Activated T-helper 1 cell treated with anti-CD3 and anti-CD28 coated beads, Interleukin-12 subunit alpha, Interleukin-12 subunit beta, Interleukin-2, Interleukin-4 antibody, amounts not matched to agents 30 ng/mL and 10 ng/mL and 1 ng/mL, durations not matched to agents 14 hours and 24 hours and 36 hours (primary cell): ENCODE measurements at regions of chr16 and their contacts with region 1.

Region 1: DNA sequence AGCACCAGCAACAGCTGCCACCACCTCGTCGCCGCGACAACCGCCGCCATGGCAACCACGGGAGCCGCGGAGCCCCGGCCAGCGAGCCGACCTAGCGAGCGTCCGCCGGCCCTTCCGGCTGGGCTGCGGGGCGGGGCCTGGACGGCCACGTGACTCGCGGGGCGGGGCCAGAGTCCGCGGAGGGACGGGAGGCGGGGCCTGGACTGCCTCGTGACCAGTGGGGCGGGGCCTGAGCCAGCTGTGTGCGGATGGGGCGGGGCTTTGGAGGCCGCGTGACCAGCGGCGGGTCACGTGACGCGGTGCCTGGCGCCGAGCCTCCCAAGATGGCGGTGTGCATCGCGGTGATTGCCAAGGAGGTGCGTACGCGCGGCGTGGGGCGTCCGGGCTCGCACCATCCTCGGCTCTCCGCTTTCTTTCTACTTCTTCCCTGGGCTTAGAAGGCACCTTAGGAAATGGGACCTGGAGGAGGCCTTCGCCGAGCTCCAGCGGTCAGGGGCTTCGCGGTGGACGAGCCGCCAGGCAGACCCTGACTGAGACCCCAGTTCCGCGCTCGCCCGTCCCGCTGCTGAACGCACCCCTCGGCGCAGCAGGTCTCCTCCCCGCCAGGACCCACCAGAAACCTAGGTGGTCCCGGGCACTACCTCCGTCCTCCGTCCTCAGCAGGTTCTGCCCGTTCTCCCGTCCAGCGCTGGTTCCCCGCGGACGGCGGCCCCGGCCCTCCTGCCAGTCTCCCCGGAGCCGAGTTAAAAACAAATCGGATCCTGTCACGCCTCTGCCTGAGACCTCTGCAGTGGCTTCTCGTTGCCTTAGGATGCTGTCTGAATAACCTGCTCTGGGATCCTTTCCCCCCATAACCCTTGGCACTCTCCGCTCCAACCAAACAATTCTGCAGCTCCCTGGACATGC is at the starts of genes GALNS and TRAPPC2L:
- DNase-seq: peak; percentile 98
- H3K4me3 Mint-ChIP-seq: peak within 1 kb of the TSS; percentile 96
- H3K27ac Mint-ChIP-seq: peak within 1 kb of the TSS; percentile 88
- H3K4me1 Mint-ChIP-seq: peaks cover 25% of the 10 kb centered on the region
- H3K27me3 Mint-ChIP-seq: no peaks in the 10 kb centered on the region
- total RNA-seq, gene GALNS: 21.9 and 23.8 TPM in 2 replicates
- total RNA-seq, gene TRAPPC2L: 63.1 and 65.4 TPM in 2 replicates

Region 2: DNA sequence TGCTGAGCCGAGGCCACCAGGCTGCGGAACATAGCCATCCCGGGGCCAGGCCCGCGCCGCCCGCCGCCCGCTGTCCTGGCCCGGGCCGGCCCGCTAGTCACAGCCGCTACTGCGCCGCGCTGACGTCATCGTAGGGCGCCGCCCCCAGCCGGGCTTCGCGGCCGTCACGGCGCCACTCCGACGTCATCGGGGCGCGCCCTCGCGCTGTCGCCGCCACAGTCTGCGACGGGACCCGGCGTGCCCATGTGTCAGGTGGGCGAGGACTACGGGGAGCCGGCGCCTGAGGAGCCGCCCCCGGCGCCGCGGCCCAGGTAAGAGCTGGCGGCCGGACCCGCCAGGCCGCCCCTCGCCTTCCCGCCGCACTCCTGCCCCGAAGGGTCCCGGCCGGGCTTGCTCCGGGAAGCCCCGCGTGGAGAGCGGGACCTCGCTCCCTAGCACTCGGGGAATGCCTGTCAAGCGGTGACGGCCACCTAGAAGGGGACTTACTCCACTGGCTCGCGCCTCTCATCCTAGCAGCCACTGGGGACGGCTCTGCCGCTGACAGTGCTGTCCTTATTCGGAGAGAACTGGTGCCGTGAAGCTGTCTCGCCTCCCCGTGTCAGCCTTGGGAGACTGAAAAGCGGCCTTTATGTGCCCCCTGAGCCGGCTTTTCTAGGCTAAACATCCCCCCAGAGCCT is 150.7 kb before region 1 on chr16 and contains the starts of genes CTU2 and RNF166:
- intact Hi-C with region 1: loop called (anchors 1 kb)
- DNase-seq: peak; percentile 92
- H3K4me3 Mint-ChIP-seq: peak within 1 kb of the TSS; percentile 89
- H3K27ac Mint-ChIP-seq: peak within 1 kb of the TSS; percentile 86
- H3K4me1 Mint-ChIP-seq: peaks cover 47% of the 10 kb centered on the region
- H3K27me3 Mint-ChIP-seq: no peaks in the 10 kb centered on the region
- total RNA-seq, gene CTU2: 66.3 and 74.7 TPM in 2 replicates
- total RNA-seq, gene RNF166: 42.4 and 45.0 TPM in 2 replicates

Region 3: DNA sequence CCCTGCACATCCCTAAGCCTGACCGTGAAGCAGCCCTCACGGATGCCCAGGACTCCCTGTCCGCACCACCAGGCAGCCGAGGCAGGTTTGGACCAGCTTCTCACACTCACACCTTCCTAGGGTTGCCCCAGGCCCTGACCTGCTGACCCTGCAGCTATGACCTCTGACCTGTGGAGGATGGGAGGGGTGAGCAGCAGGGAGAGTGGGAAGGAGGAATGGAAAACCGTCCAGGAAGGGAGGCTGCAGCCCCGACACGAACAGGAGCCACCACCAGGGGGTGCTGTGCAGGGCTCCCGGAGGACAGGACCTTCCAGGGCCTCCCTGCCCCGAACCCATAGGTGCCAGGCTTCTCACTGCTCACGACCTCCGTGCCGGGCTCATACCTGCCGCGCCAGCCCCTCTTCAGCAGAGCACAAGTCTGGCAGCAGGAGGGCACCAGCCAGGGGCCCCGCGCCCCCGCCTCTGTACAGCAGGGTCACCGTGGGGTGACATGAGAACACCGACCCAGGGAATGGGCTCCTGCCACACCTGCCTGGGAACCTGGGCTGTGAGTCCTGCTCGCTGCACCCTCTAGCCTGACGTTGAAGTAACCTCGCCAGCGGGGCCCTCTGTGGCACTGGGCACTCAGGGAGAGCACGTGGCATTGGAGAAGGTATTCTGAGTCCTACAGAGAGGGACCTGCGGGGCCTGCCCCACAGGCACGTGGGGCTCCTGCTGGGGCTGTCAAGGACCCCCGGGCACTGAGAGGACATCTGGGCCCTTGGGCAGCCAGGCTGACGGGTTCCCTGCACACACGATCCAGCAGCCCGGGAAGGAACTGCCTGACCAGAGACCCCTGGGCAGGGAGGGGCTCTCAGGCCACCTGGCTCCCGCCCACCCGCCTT is 113.1 kb before region 1 on chr16:
- intact Hi-C with region 1: loop called (anchors 2 kb)
- DNase-seq: peak; percentile 47
- H3K4me3 Mint-ChIP-seq: no peak overlapping the region
- H3K27ac Mint-ChIP-seq: no peak overlapping the region
- H3K4me1 Mint-ChIP-seq: peaks cover 10% of the 10 kb centered on the region
- H3K27me3 Mint-ChIP-seq: no peaks in the 10 kb centered on the region

Region 4: GRCh38 chr16:88803264-88803987 is 53.7 kb before region 1 on chr16 and contains the start of gene CDT1:
- intact Hi-C with region 1: loop called (anchors 2 kb)
- DNase-seq: peak; percentile 84
- H3K4me3 Mint-ChIP-seq: peak within 1 kb of the TSS; percentile 85
- H3K27ac Mint-ChIP-seq: peak within 1 kb of the TSS; percentile 84
- H3K4me1 Mint-ChIP-seq: peaks cover 15% of the 10 kb centered on the region
- H3K27me3 Mint-ChIP-seq: no peaks in the 10 kb centered on the region
- total RNA-seq, gene CDT1: 95.4 and 97.3 TPM in 2 replicates

Region 5: DNA sequence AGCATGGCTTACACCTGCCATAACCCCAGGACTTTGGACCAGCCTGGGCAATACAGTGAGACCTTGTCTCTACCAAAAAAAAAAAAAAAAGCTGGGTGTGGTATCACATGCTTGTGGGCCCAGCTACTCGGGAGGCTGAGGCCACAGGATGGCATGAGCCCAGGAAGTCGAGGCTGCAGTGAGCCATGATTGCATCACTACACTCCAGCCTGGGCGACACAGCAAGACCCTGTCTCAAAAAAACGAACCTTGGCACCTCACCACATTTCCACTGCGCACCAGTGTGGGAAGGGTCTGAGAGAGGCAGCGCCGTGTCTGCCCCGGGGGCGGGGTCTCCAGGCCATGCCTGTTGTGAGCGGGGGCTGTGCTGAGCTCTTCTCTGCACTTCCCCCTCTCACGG is 242.8 kb after region 1 on chr16:
- intact Hi-C with region 1: loop called (anchors 5 kb)
- DNase-seq: no peak
- H3K4me3 Mint-ChIP-seq: peak overlapping the region; percentile 56
- H3K27ac Mint-ChIP-seq: peak overlapping the region; percentile 73
- H3K4me1 Mint-ChIP-seq: peaks cover 66% of the 10 kb centered on the region
- H3K27me3 Mint-ChIP-seq: no peaks in the 10 kb centered on the region

Region 6: DNA sequence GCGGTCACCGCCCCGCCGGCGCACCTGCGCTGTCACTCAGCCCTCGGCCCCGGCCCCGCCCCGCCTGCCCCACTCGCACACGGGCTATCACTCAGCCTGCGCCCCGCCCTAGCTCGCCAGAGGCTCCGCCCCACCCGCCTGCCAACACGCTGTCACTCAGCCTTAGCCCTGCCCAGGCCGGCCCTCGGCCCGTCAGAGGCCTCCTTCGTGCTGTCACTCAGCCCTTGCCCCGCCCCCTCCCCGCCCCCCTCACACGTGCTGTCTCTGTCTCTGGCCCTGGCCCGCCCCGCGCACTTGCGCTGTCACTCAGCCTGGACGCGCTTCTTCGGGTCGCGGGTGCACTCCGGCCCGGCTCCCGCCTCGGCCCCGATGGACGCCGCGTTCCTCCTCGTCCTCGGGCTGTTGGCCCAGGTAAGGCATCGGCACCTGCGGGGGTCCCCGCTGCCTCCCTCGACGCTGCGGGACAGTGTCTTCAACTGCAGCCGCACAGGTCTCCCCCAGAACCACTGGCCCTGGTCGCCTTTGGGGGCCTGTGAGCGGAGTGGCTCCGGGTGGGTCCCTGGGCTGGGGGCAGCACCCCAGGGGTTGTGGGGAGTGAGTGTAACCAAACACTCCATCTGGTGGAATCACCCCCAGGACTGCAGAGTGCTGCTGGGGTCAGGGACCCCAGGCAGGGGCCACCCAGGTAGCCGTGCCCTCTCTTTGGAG is 314.5 kb after region 1 on chr16 and contains the start of gene CDH15:
- intact Hi-C with region 1: loop called (anchors 1 kb)
- DNase-seq: peak; percentile 86
- H3K4me3 Mint-ChIP-seq: peak within 1 kb of the TSS; percentile 71
- H3K27ac Mint-ChIP-seq: peak within 1 kb of the TSS; percentile 55
- H3K4me1 Mint-ChIP-seq: peaks cover 6% of the 10 kb centered on the region
- H3K27me3 Mint-ChIP-seq: no peaks in the 10 kb centered on the region
- total RNA-seq, gene CDH15: not detected in 2 replicates